ENCODE measurements at regions of chr2 and their contacts with region 1.

Region 1: GRCh38 chr2:204177977-204178540 is 241.5 kb downstream of the ICOS start:
- DNase-seq: peak; percentile 51
- H3K4me3 Mint-ChIP-seq: no peak overlapping the region
- H3K27ac Mint-ChIP-seq: no peak overlapping the region
- H3K4me1 Mint-ChIP-seq: no peaks in the 10 kb centered on the region
- H3K27me3 Mint-ChIP-seq: peaks cover 17% of the 10 kb centered on the region

Region 2: GRCh38 chr2:203928849-203929248 is 249.2 kb before region 1 on chr2:
- intact Hi-C with region 1: loop called (anchors 1 kb)
- DNase-seq: no peak
- H3K4me3 Mint-ChIP-seq: no peak overlapping the region
- H3K27ac Mint-ChIP-seq: no peak overlapping the region
- H3K4me1 Mint-ChIP-seq: peaks cover 40% of the 10 kb centered on the region
- H3K27me3 Mint-ChIP-seq: peaks cover 7% of the 10 kb centered on the region

Region 3: DNA sequence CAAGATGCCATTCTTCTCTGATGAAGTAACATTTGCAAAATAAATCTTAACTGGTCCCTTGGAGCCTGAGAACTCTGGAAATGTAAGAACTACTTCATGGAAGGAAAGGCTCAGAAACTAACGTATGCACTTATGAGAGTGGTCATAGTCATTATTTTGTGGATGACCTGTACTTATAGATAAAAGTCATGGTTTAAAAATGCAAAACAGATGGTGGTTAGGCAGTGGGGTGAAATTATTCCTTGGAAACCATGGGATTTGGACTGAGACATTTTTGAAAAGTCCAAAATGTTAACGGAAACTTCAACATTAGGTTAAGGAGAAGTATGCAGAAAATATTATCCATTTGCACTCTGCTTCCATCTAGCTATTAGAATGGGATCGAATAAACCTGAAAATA is 18.5 kb before region 1 on chr2:
- intact Hi-C with region 1: no loop called
- DNase-seq: no peak
- H3K4me3 Mint-ChIP-seq: no peak overlapping the region
- H3K27ac Mint-ChIP-seq: no peak overlapping the region
- H3K4me1 Mint-ChIP-seq: no peaks in the 10 kb centered on the region
- H3K27me3 Mint-ChIP-seq: peaks cover 12% of the 10 kb centered on the region

Region 4: GRCh38 chr2:204191574-204192335 is 13.7 kb after region 1 on chr2:
- intact Hi-C with region 1: no loop called
- DNase-seq: no peak
- H3K4me3 Mint-ChIP-seq: no peak overlapping the region
- H3K27ac Mint-ChIP-seq: no peak overlapping the region
- H3K4me1 Mint-ChIP-seq: peaks cover 15% of the 10 kb centered on the region
- H3K27me3 Mint-ChIP-seq: peaks cover 11% of the 10 kb centered on the region

Measured in activated T-helper 1 cell treated with anti-CD3 and anti-CD28 coated beads, Interleukin-12 subunit alpha, Interleukin-12 subunit beta, Interleukin-2, Interleukin-4 antibody, amounts not matched to agents 30 ng/mL and 10 ng/mL and 1 ng/mL, durations not matched to agents 14 hours and 24 hours and 36 hours (primary cell).